Prostate gland (tissue), 2 donors: ENCODE measurements at regions of chr5 and their contacts with region 1.

Region 1: DNA sequence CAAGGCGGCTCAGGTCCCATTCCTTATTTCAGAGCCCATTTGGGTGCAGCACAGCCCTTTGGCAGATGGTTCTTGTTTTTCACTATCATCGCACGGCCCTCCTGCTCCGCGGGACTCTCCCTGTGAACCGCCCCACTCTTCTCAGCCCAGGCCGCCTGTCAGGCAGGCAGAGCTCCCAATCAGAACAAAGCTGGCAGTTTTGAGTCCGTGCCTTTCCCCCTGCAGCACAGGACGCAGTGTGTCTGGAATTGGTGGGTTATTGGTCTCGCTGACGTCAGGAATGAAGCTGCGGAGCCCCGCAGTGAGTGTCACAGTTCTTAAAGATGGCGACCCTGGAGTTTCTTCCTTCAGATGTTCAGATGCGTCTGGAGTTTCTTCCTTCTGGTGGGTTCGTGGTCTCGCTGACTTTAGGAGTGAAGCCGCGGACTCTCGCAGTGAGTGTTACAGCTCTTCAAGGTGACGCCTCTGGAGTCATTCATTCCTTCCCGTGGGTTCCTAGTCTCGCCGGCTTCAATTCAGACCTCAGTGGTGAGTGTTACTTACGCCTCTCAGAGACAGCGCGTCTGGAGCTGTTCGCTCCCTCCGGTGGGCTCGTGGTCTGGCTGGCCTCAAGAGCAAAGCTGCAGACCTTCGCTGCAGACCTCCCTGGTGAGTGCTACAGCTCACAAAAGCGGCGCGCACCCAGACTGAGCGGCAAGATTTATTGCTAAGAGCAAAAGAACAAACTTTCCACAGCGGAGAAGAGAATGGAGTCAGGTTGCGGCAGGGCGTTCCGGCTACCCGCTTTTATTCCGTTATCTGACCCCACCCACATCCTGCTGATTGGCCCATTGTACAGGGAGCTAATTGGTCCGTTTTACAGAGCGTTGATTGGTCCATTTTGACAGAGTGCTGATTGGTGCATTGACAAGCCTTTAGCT is 7.5 kb downstream of the ZDHHC11B start:
- DNase-seq: no peak
- H3K4me3 ChIP-seq: no peak overlapping the region
- H3K27ac ChIP-seq: no peak overlapping the region
- H3K4me1 ChIP-seq: no peaks in the 10 kb centered on the region
- H3K27me3 ChIP-seq: no peaks in the 10 kb centered on the region
- CTCF ChIP-seq: no peak
- POLR2A ChIP-seq: no peak

Region 2: GRCh38 chr5:683551-684481 is 93.2 kb before region 1 on chr5:
- intact Hi-C with region 1: loop called (anchors 2 kb)
- DNase-seq: no peak
- H3K4me3 ChIP-seq: no peak overlapping the region
- H3K27ac ChIP-seq: no peak overlapping the region
- H3K4me1 ChIP-seq: no peaks in the 10 kb centered on the region
- H3K27me3 ChIP-seq: no peaks in the 10 kb centered on the region
- CTCF ChIP-seq: no peak
- POLR2A ChIP-seq: no peak

Region 3: GRCh38 chr5:892394-893136 is 115.5 kb after region 1 on chr5 and contains the starts of genes BRD9 and TRIP13:
- intact Hi-C with region 1: loop called (anchors 10 kb)
- DNase-seq: peak; percentile 74
- H3K4me3 ChIP-seq: peak within 1 kb of the TSS; percentile 78 to 95
- H3K27ac ChIP-seq: peak within 1 kb of the TSS; percentile 78 to 85
- H3K4me1 ChIP-seq: peaks cover 7% of the 10 kb centered on the region
- H3K27me3 ChIP-seq: no peaks in the 10 kb centered on the region
- CTCF ChIP-seq: peak in 1 of 4 experiments; percentile 42
- POLR2A ChIP-seq: peak; percentile 17
- total RNA-seq, gene BRD9: 17.9 to 46.2 TPM
- total RNA-seq, gene TRIP13: 1.8 to 11.9 TPM

Region 4: DNA sequence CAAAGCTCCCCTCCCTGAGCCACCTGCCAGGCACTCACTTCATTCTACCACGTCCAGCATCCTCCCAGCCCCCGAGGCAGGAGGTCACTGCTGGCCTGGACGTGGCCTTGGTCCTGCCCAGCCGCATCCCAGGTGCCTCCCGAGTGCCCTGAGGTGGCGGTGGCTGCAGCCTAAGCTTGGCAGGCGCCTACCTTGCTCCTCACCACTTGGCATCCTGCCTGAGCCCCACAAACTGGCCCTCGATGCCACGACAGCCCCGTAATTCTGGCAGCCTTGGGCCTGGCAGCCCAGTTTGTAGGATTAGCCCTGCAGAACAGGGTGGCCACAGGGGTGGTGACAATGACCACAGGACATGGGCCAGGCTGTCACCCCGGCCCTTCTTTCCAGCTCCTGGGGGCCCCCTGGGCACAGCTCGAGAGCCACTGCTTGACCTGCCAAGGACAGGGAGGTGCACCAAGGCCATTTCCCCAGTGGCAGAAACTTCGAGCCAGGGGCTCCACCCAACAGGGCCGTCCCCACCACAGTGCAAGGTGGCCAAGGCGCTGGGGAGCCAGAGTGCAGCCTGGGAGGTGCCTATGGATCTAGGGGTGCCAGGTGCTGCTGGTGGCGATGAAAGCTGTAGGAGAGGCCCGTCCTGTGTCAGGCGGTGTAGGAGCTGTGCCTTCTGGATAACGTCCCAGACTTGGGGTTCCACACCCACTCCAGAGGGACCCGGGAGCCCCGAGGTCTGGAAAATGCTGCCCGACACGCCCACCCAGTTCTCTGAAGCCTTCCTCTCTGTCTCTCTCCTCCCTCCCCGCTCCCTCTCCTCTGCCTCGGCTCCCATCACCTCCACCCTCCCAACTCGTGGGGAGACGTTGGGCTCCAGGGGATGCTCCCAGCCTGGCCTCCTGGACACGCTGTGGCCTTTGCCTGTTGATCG is 249.9 kb after region 1 on chr5:
- intact Hi-C with region 1: no loop called
- DNase-seq: no peak
- H3K4me3 ChIP-seq: no peak overlapping the region
- H3K27ac ChIP-seq: no peak overlapping the region
- H3K4me1 ChIP-seq: no peaks in the 10 kb centered on the region
- H3K27me3 ChIP-seq: peaks cover 4% of the 10 kb centered on the region
- CTCF ChIP-seq: no peak
- POLR2A ChIP-seq: no peak